ENCODE measurements at regions of chrX and their contacts with region 1.

Region 1: DNA sequence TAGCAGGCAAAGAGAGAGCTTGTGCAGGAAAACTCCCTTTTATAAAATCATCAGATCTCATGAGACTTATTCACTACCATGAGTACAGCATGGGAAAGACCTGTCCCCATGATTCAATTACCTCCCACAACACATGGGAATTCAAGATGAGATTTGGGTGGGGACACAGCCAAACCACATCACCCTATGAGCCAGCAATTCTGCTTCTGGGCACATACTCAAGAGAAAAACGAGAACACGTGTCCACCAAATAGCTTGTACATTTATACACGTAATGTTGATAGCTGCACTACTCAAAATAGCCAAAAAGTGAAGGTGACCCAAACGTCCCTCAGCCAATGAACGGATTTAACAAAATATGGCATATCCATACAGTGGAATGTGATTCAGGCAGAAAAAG is 94.5 kb upstream of the DHRSX start:
- DNase-seq: no peak
- ATAC-seq: no peak

Region 2: DNA sequence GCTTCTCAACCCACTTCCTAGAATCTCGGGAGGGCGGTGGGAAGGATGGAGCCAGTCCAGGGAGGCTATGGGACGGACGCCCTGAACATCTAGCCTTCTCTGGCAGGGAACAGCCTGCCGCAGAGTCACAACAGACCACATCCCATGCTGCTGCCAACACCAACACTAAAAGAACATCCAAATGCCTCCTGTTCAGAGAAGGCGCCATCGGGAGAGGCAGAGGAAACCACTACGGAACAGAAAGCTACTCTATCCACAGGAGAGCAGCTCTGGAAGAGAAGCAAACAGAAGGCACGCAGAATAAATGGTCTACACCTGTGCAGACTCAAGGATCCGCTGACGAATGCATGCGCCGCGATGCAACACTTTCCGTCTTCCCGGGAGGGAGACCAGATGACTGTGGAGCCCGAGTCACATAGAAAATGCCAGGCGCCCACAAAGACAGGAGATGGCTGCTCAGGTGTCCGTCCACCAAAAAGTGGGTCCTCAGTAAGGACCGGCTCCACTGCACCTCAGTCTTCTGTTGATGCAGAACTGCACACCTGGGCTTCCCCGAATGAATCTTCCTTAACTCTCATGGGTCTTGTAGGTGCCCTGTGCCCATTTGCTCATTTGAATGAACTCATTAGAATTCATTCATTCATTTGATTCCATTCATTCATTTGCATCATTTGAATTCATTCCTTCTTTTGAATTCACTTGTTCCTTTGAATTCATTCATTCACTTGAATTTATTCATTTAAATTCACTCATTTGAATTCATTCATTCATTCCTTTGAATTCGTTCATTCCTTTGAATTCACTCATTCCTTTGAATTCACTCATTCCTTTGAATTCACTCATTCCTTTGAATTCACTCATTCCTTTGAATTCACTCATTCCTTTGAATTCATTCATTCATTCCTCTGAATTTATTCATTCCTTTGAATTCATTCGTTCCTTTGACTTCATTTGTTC is 311.9 kb before region 1 on chrX:
- intact Hi-C with region 1: loop called (anchors 10 kb)
- DNase-seq: no peak
- ATAC-seq: no peak

Region 3: GRCh38 chrX:2828344-2828958 is 233.2 kb after region 1 on chrX and contains the start of gene GYG2:
- intact Hi-C with region 1: no loop called
- DNase-seq: no peak
- ATAC-seq: peak; percentile 15
- total RNA-seq, gene GYG2: 1.3 TPM